Activated naive CD4-positive, alpha-beta T cell treated with anti-CD3 and anti-CD28 coated beads for 36 hours (primary cell): ENCODE measurements at regions of chr11 and their contacts with region 1.

Region 1: GRCh38 chr11:118435893-118436624 is at the start of gene KMT2A:
- DNase-seq: peak; percentile 95
- H3K4me3 Mint-ChIP-seq: peak within 1 kb of the TSS; percentile 90
- H3K27ac Mint-ChIP-seq: peak within 1 kb of the TSS; percentile 98
- H3K4me1 Mint-ChIP-seq: peaks cover 28% of the 10 kb centered on the region
- H3K27me3 Mint-ChIP-seq: no peaks in the 10 kb centered on the region
- total RNA-seq, gene KMT2A: 68.4 to 68.5 TPM

Region 2: DNA sequence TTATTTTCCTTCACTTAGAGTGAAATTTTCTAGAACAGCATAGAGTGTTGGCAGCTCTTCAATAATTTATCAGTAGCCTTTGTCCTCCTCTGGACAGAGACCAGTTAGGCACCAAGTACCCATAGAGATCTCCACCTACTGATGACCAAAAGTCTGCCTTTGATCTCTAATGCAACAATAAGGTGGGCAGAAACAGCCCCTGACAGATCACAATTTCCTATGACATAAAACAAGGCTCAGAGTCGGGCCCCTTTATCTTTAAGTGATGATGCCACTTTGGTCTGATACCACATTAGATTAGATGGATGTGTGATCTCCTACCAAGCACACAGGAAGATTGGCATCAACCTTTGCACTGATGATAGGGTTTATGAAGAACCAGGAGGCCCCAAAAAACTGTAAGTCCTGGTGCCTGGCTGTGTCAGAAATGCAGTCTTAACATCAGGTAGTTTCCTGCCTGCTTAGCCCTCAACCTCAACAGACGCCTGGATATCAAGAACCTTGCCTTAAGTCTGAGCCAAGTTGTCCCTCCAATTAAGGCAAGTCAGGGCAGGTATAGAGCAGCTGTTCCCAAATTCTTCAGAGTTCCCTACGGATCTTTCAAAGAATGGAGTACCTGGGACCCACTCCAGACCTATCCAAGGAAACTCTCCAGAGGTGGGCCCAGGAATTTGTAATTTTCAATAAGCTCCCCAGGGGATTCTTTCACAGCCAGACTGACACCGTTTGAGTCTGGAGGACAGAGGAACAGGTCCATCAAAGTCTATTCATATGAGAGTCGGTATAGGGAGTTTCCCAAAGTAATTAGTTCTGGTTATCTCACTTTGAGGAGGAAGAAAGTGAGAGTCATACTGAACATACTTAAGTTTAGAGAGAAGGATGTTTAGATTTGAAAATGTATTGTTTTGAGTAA is 389.8 kb before region 1 on chr11:
- CTCF ChIA-PET with region 1: no interaction called
- intact Hi-C with region 1: loop called (anchors 5 kb)
- DNase-seq: peak; percentile 52
- H3K4me3 Mint-ChIP-seq: no peak overlapping the region
- H3K27ac Mint-ChIP-seq: peak overlapping the region; percentile 63
- H3K4me1 Mint-ChIP-seq: peaks cover 78% of the 10 kb centered on the region
- H3K27me3 Mint-ChIP-seq: no peaks in the 10 kb centered on the region

Region 3: DNA sequence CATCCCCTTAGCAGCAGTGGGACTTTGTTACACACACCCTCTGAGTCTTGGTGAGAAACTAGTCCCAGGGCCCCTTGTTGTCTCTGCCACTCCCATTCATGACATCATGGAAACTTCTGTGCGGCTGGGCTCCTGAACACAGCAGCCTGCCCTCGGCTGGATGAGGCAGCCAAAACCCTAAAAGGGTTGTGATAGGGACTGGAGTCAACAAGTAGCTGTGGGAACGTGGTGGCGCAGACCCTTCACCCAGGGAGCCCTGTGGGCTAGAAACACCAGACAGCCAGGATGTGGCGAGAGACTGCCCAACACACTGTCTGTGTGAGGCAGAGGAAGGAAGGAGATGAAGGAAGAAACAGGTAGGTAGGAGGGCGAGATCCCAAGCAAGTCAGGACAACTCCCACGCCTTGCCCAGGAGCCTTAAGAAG is 97.4 kb before region 1 on chr11:
- CTCF ChIA-PET with region 1: interaction called, 5 read pairs
- intact Hi-C with region 1: loop called (anchors 1 kb)
- DNase-seq: peak; percentile 97
- H3K4me3 Mint-ChIP-seq: peak overlapping the region; percentile 81
- H3K27ac Mint-ChIP-seq: peak overlapping the region; percentile 100
- H3K4me1 Mint-ChIP-seq: peaks cover 43% of the 10 kb centered on the region
- H3K27me3 Mint-ChIP-seq: no peaks in the 10 kb centered on the region

Region 4: DNA sequence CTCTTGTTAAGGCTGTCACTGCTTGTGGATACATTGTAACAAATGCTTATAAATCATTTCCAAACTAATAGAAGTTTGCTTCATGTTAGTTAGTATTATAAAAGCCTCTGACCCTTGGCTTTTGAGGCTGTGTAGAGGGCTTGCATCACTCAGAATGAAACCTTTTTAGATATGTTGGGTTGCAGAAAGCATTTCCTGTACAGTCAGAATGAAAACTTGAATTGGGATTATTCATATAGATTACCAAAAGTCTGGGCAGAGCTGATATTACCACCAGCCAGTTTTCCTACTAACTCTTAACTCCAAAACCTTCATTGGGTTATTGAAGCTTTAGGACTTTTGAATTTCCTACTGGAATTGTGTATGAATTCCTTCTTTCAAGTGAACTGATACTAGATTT is 12.2 kb after region 1 on chr11:
- CTCF ChIA-PET with region 1: interaction called, 6 read pairs
- intact Hi-C with region 1: loop called (anchors 1 kb)
- DNase-seq: peak; percentile 24
- H3K4me3 Mint-ChIP-seq: no peak overlapping the region
- H3K27ac Mint-ChIP-seq: no peak overlapping the region
- H3K4me1 Mint-ChIP-seq: peaks cover 72% of the 10 kb centered on the region
- H3K27me3 Mint-ChIP-seq: no peaks in the 10 kb centered on the region

Region 5: GRCh38 chr11:118565051-118565450 is 129.0 kb after region 1 on chr11:
- CTCF ChIA-PET with region 1: no interaction called
- intact Hi-C with region 1: loop called (anchors 1 kb)
- DNase-seq: no peak
- H3K4me3 Mint-ChIP-seq: peak overlapping the region; percentile 70
- H3K27ac Mint-ChIP-seq: no peak overlapping the region
- H3K4me1 Mint-ChIP-seq: peaks cover 24% of the 10 kb centered on the region
- H3K27me3 Mint-ChIP-seq: no peaks in the 10 kb centered on the region

Region 6: GRCh38 chr11:118703563-118704106 is 267.6 kb after region 1 on chr11:
- CTCF ChIA-PET with region 1: no interaction called
- intact Hi-C with region 1: no loop called
- DNase-seq: no peak
- H3K4me3 Mint-ChIP-seq: no peak overlapping the region
- H3K27ac Mint-ChIP-seq: no peak overlapping the region
- H3K4me1 Mint-ChIP-seq: peaks cover 46% of the 10 kb centered on the region
- H3K27me3 Mint-ChIP-seq: no peaks in the 10 kb centered on the region

Region 7: GRCh38 chr11:118870396-118871345 is 434.6 kb after region 1 on chr11:
- CTCF ChIA-PET with region 1: no interaction called
- intact Hi-C with region 1: loop called (anchors 10 kb)
- DNase-seq: peak; percentile 80
- H3K4me3 Mint-ChIP-seq: peak overlapping the region; percentile 85
- H3K27ac Mint-ChIP-seq: peak overlapping the region; percentile 100
- H3K4me1 Mint-ChIP-seq: peaks cover 67% of the 10 kb centered on the region
- H3K27me3 Mint-ChIP-seq: no peaks in the 10 kb centered on the region

Region 8: DNA sequence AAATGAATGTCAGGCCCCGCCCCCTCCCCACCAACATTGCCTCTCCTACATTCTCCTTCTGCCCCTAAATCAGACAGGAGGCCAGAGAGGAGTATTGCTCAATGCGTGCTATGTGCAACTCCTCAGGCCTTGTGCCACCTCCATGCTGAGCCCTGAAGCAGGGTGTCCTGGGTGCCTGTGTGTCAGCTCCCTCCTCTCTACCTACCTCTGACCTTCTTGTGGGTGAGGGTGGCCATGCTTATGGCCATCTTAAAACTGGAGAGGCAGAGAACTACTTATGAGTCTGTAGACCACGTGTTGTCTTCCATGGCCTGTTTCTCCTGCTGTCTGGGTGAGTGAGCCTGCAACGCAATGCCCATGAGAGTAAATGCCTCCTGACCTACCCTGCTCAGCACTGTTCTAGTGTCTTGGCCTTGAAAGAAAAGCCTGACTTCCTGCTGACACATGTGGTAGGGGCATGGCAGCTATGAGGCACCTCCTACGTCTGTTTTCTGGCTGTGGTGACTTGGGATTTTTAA is 870.4 kb after region 1 on chr11:
- CTCF ChIA-PET with region 1: no interaction called
- intact Hi-C with region 1: no loop called
- DNase-seq: peak; percentile 74
- H3K4me3 Mint-ChIP-seq: peak overlapping the region; percentile 60
- H3K27ac Mint-ChIP-seq: peak overlapping the region; percentile 93
- H3K4me1 Mint-ChIP-seq: peaks cover 32% of the 10 kb centered on the region
- H3K27me3 Mint-ChIP-seq: no peaks in the 10 kb centered on the region